Activated CD4-positive, alpha-beta T cell treated with anti-CD3 and anti-CD28 coated beads for 36 hours (primary cell): ENCODE measurements at regions of chr5 and their contacts with region 1.

Region 1: GRCh38 chr5:96614110-96614691 is 48.0 kb upstream of the CAST start:
- DNase-seq: peak; percentile 69
- ATAC-seq: peak; percentile 86
- H3K4me3 Mint-ChIP-seq: no peak overlapping the region
- H3K27ac Mint-ChIP-seq: no peak overlapping the region
- H3K4me1 Mint-ChIP-seq: peaks cover 5% of the 10 kb centered on the region
- H3K27me3 Mint-ChIP-seq: peaks cover 17% of the 10 kb centered on the region

Region 2: DNA sequence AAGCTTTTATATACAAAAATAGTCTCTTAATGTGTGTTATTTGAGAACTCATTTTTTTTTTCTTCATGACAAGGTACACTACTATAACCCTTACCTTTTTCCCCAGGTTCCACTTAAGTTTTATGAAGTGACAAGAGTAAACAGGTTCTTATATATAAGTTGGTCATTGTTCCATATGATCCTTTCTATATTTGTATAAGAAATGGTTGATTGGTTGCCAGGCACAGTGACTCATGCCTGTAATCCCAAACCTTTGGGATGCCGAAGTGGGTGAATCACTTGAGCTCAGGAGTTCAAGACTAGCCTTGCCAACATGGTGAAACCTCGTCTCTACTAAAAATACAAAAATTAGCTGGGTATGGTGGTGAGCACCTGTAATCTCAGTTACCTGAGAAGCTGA is 289.5 kb before region 1 on chr5:
- CTCF ChIA-PET with region 1: no interaction called
- POLR2A ChIA-PET with region 1: no interaction called
- intact Hi-C with region 1: no loop called
- DNase-seq: no peak
- ATAC-seq: no peak
- H3K4me3 Mint-ChIP-seq: no peak overlapping the region
- H3K27ac Mint-ChIP-seq: no peak overlapping the region
- H3K4me1 Mint-ChIP-seq: no peaks in the 10 kb centered on the region
- H3K27me3 Mint-ChIP-seq: peaks cover 17% of the 10 kb centered on the region

Region 3: GRCh38 chr5:96651948-96652753 is 38.0 kb after region 1 on chr5:
- CTCF ChIA-PET with region 1: interaction called, 11 read pairs
- POLR2A ChIA-PET with region 1: no interaction called
- intact Hi-C with region 1: loop called in 1 of 2 experiments (anchors 5 kb)
- DNase-seq: peak; percentile 23
- ATAC-seq: peak; percentile 51
- H3K4me3 Mint-ChIP-seq: no peak overlapping the region
- H3K27ac Mint-ChIP-seq: no peak overlapping the region
- H3K4me1 Mint-ChIP-seq: peaks cover 16% of the 10 kb centered on the region
- H3K27me3 Mint-ChIP-seq: peaks cover 30% of the 10 kb centered on the region

Region 4: DNA sequence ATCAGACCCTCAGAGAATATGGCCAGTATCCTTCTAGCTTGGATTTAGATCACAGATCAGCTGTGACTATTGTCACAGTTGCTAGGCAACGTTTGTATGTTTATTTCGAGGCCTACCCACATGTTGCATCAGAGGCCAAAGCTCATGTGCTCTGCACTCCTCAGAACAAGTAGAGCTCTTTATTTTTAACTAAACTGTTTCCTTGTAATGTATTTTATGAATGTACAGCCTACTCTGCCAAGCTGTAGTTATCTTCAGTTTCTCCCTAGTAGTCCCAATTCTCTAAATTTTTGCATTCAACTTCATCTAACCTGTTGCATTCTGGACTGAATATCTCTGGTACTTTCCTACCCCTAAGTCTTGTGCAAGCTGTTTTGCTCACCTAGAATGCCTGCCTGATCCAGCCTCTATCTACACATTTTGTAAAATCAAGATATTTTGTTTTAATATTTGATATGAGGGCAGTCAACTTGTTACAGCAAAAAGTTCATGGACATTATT is 100.8 kb after region 1 on chr5:
- CTCF ChIA-PET with region 1: interaction called, 11 read pairs
- POLR2A ChIA-PET with region 1: no interaction called
- intact Hi-C with region 1: no loop called
- DNase-seq: peak; percentile 53
- ATAC-seq: peak; percentile 71
- H3K4me3 Mint-ChIP-seq: no peak overlapping the region
- H3K27ac Mint-ChIP-seq: peak overlapping the region; percentile 33
- H3K4me1 Mint-ChIP-seq: peaks cover 38% of the 10 kb centered on the region
- H3K27me3 Mint-ChIP-seq: no peaks in the 10 kb centered on the region

Region 5: GRCh38 chr5:96745844-96746531 is 131.8 kb after region 1 on chr5:
- CTCF ChIA-PET with region 1: interaction called, 10 read pairs
- POLR2A ChIA-PET with region 1: no interaction called
- intact Hi-C with region 1: loop called (anchors 5 kb)
- DNase-seq: no peak
- ATAC-seq: peak; percentile 13
- H3K4me3 Mint-ChIP-seq: no peak overlapping the region
- H3K27ac Mint-ChIP-seq: peak overlapping the region; percentile 76
- H3K4me1 Mint-ChIP-seq: peaks cover 38% of the 10 kb centered on the region
- H3K27me3 Mint-ChIP-seq: no peaks in the 10 kb centered on the region

Region 6: DNA sequence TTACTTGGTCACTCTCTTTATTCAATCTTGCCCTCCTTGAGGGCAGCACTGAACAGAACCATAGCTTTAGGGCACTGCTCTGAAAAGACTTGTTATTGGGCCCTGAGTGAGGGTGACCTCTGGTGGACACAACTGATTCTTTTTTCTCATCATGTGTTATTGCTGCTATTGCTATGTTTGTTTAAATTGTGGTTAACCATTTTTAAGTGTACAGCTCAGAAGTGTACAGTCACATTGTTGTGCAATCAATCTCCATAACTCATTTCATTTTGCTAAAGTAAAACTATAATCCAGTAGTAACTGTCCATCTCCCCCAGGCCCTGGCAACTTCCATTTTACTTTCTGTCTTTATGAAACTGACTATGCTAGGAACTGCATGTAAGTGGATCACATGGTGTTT is 920.0 kb after region 1 on chr5:
- CTCF ChIA-PET with region 1: no interaction called
- POLR2A ChIA-PET with region 1: no interaction called
- intact Hi-C with region 1: loop called in 1 of 2 experiments (anchors 5 kb)
- DNase-seq: no peak
- ATAC-seq: peak; percentile 36
- H3K4me3 Mint-ChIP-seq: no peak overlapping the region
- H3K27ac Mint-ChIP-seq: no peak overlapping the region
- H3K4me1 Mint-ChIP-seq: no peaks in the 10 kb centered on the region
- H3K27me3 Mint-ChIP-seq: peaks cover 3% of the 10 kb centered on the region